Body of pancreas (tissue), 4 donors: ENCODE measurements at regions of chr4 and their contacts with region 1.

Region 1: DNA sequence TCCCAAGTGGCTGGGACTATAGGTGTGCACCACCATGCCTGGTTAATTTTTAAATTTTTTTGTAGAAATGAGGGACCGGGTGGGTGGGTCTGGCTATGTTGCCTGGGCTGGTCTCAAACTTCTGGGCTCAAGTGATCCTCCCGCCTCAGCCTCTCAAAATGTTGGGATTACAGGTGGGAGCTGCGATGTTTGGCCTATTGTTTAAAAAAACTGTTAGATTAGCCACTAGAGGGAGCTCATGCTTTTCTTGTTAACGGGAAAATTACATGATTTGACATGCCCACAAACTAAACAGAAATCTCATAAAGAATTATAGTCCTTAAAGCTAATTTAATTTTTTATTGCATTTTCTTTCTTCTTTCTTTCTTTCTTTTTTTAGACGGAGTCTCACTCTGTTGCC is 5.0 kb upstream of the SDAD1 start:
- DNase-seq: peak in 1 of 4 donors; percentile 9
- ATAC-seq: no peak
- H3K4me3 ChIP-seq: no peak overlapping the region
- H3K27ac ChIP-seq: no peak overlapping the region
- H3K4me1 ChIP-seq: peaks cover 7% of the 10 kb centered on the region
- H3K27me3 ChIP-seq: no peaks in the 10 kb centered on the region
- CTCF ChIP-seq: peak; percentile 52 to 83 (median 74)
- POLR2A ChIP-seq: no peak

Region 2: DNA sequence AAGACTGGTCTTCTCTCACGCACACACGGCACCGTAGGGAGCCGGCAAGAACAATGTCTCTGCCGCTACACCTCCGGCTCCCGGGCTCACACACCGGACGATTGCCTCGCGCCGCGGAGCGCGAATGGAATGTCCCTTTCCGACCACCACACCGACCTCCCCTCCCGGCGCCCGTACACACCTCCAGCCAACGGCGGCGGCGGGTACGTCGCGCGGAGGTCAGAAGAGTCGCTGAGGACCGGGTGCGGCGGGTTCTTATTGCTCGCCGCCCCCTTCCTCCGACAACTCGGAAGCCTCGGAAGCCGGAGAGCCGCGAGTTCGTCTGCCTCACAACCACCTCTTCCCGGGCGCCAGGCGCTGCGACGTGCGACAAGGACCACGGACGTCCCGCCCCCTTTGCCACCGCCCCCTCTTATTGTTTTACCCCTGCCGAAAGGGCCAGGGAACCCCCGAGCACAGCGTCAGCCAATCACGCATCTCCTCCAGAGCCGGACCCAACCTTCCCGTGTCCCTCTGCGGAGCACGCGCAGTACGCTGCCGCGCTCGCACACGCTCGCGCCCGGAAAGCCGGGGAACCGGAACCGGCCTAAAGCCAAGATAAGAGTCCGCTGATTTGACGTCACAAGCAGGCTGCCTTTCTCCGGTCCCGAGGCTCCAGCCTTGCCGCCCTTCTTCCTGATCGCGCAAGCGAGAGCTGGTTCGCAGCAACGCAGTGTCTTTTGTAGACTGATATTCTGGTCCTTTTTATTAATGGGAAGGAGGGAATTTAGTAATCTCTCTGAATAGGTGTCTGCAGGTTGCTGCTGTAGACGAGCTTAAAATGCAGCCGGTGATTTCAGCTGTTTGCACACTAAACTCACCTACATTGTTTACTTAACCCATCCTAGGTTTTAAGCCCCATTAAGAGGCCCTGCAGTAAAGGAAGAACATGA is 322.4 kb before region 1 on chr4 and contains the start of gene G3BP2:
- intact Hi-C with region 1: no loop called
- DNase-seq: peak; percentile 98 to 99 (median 98)
- ATAC-seq: peak; percentile 99
- H3K4me3 ChIP-seq: peak within 1 kb of the TSS; percentile 75 to 93
- H3K27ac ChIP-seq: peak within 1 kb of the TSS; percentile 88 to 96 (median 92)
- H3K4me1 ChIP-seq: peaks cover 33% of the 10 kb centered on the region
- H3K27me3 ChIP-seq: no peaks in the 10 kb centered on the region
- CTCF ChIP-seq: peak in 1 of 7 experiments; percentile 12
- POLR2A ChIP-seq: peak; percentile 91 to 97 (median 97)
- total RNA-seq, gene G3BP2: 29.7 to 65.6 TPM

Region 3: DNA sequence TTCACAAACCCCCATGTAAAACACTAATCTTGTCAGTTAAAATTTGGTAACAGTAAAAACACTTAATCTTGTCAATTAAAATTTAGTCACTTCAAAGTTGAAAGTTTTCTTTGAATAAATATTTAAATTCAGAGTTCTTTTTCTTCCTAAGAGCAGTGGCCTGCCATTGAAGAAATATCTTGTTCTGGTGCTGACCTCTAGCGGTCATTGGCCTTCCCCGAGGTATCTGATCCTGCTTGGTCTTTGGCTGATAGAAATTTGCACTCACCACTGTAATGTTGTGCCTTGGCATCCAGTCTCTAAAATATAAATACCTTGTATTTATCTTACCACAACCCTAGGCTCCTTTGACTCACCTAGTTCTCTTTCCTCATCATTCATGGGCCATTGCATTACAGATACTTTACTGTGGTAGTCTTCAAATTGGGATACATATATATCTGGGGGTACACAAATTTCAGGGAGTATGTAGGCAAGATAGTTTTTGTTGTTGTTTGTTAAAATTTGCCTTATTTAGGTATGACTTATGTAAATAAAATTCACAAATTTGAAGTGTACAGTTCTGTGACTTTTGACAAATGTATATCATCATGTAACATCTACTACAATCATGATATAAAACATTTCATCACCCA is 72.0 kb after region 1 on chr4:
- intact Hi-C with region 1: loop called (anchors 5 kb)
- DNase-seq: peak; percentile 81 to 89 (median 86)
- ATAC-seq: peak; percentile 85
- H3K4me3 ChIP-seq: no peak overlapping the region
- H3K27ac ChIP-seq: no peak overlapping the region
- H3K4me1 ChIP-seq: peaks cover 5% of the 10 kb centered on the region
- H3K27me3 ChIP-seq: no peaks in the 10 kb centered on the region
- CTCF ChIP-seq: peak; percentile 68 to 87 (median 83)
- POLR2A ChIP-seq: no peak